ENCODE measurements at regions of chr1 and their contacts with region 1.

Region 1: DNA sequence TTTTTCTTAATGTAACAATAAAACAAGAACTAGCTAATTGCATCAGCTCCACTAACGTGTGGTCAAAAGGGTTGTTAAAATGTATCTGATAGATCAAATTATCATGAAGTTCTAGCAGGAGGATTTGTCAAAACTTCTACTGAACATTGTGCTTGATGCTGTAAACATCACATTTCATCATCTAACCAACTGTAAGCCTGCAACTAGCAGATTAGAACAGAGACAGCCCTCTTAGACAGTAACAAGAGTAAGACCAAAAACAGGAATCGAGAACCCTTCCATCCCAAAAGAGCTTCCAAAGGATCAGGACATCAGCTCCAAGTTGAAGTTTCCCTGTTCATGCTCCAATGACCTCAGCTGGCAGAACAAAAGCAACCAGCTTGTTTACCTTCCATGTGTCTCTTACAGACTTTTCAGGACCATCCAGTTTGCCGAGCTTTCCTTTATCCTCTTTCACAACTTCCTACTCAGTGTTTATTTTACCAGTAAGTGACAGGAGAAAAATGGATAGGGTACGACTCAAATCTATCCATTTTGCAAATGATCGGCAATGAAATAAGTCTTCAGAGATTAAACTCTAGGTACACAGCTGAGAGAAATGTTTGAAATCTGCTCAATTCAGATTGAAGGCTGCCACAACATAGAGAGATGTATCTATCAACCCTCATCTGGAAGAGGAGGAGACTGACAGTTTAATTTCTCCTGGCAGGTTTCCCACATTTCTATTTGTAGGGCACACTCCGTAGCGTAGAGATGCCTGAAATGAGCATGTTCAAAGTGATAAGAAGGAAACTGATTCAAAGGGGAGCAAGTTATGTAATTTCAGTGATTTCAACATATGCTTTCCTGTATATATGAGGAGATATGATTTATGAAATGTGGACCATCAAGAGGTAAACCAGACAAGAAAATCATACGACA is 44.3 kb downstream of the NIBAN1 start:
- DNase-seq: no peak

Region 2: GRCh38 chr1:184870319-184870718 is 59.7 kb before region 1 on chr1:
- intact Hi-C with region 1: loop called (anchors 10 kb)
- DNase-seq: no peak